B cell (primary cell): ENCODE measurements at regions of chr2 and their contacts with region 1.

Region 1: DNA sequence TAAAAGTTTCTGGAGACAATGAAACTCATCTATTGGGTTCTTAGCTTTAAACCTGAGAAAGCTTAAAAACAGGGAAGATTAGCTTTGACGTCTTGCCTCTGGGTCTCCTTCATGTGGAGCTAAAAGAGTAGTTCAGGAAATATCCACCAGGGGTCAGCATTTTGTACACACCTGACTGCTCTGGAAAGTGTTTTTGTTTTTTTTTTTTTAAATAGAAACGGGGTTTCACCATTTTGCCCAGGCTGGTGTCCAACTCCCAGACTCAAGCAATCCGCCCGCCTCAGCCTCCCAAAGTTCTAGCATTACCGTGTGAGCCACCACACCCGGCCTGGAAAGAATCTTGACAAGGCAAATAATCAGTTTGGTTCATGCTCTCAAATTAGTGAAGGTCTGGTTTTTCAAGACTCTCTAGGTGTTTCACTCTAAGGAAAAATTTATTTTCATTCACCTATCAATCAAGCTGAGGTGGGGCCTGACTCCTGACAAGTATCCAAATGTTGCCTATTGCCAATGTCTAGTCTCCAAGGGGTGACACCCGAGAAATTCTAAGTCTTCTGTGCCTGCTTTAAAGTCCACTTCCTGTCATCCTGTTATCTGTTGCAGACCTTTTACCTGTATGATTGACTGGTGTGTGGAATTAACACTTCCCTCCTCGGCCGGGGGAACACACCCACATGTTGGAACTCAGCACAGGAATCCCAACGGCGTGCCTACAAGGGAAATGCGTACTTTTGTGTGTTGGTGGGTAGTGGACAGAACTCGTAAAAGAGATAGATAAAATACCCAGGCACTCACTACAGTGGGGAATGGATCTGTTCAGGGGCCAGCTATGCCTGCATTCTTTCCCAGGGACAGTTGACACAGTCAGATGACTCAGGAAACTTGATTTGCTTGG is 11.3 kb downstream of the IL1RN start:
- DNase-seq: peak; percentile 88
- ATAC-seq: peak; percentile 82
- H3K4me3 ChIP-seq: peak overlapping the region in 1 of 5 experiments; percentile 19
- H3K4me3 Mint-ChIP-seq: peak overlapping the region; percentile 71
- H3K27ac ChIP-seq: peak overlapping the region in 1 of 2 donors; percentile 24
- H3K27ac Mint-ChIP-seq: peak overlapping the region; percentile 73
- H3K4me1 ChIP-seq: peaks cover 11 to 13% of the 10 kb centered on the region in 2 donors
- H3K4me1 Mint-ChIP-seq: peaks cover 15% of the 10 kb centered on the region
- H3K27me3 ChIP-seq: no peaks in the 10 kb centered on the region
- H3K27me3 Mint-ChIP-seq: no peaks in the 10 kb centered on the region
- CTCF ChIP-seq: peak; percentile 86

Region 2: DNA sequence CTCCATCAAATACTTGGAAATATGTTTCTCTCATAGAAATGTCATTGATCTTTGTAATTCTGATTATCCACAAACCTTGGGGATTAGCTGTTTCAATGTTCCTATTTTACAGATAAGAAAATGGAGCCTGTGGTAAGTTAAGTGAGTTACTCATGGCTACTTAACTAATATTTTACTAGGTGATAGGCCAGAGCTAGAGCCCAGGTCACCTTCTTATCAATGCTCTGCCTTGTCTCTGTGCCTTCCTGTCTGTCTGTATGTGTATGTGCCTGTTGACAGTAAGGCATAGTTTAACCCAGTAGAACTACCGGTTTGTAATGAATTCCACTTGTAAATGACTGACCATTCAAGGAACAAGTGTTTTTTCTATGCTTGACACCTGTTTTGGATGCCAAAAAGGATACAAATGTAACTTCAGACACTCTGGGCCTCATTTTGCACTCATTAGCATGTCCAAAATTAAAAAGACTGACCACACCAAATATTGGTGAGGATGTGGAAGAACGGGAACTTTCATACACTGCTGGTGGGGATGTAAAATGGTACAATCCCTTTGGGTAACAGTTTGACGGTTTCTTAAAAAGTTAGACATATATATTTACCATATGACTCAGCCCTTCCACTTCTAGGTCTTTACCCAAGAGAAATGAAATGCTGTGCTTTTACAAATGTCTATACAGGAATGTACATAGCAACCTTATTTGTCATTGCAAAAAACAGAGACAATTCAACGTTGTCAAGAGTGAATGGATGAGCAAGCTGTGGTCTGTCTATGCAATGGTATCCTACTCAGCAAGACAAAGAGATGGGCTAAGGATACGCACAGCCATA is 334.8 kb before region 1 on chr2:
- CTCF ChIA-PET with region 1: no interaction called
- POLR2A ChIA-PET with region 1: no interaction called
- intact Hi-C with region 1: no loop called
- DNase-seq: no peak
- ATAC-seq: no peak
- H3K4me3 ChIP-seq: no peak overlapping the region
- H3K4me3 Mint-ChIP-seq: no peak overlapping the region
- H3K27ac ChIP-seq: no peak overlapping the region
- H3K27ac Mint-ChIP-seq: no peak overlapping the region
- H3K4me1 ChIP-seq: peaks cover 0 to 4% of the 10 kb centered on the region in 2 donors
- H3K4me1 Mint-ChIP-seq: peaks cover 11% of the 10 kb centered on the region
- H3K27me3 ChIP-seq: no peaks in the 10 kb centered on the region
- H3K27me3 Mint-ChIP-seq: no peaks in the 10 kb centered on the region
- CTCF ChIP-seq: no peak

Region 3: DNA sequence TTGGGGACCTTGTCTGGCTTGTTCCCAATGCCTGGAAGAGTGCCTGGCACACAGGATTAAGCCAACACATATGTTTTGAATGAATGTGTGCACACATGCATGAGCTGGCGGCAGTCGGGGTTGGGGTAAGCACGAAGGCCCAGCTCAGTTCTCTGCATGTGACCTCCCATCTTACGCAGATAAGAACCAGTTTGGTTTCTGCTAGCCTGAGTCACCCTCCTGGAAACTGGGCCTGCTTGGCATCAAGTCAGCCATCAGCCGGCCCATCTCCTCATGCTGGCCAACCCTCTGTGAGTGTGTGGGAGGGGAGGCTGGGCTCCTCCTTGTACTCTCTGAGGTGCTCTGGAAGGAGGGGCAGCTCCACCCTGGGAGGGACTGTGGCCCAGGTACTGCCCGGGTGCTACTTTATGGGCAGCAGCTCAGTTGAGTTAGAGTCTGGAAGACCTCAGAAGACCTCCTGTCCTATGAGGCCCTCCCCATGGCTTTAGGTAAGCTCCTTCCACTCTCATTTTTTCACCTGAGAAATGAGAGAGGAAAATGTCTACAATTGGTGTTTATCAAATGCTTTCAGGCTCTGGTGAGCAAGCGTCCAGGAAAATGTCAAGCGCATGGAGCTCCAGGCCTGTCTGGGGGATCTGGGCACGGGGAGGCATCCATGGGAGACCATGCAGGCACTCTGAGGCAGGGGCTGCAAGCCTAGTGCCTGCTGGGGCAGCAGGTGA is 21.0 kb before region 1 on chr2:
- CTCF ChIA-PET with region 1: interaction called, 16 read pairs
- POLR2A ChIA-PET with region 1: no interaction called
- intact Hi-C with region 1: no loop called
- DNase-seq: no peak
- ATAC-seq: no peak
- H3K4me3 ChIP-seq: no peak overlapping the region
- H3K4me3 Mint-ChIP-seq: no peak overlapping the region
- H3K27ac ChIP-seq: no peak overlapping the region
- H3K27ac Mint-ChIP-seq: no peak overlapping the region
- H3K4me1 ChIP-seq: peaks cover 25 to 27% of the 10 kb centered on the region in 2 donors
- H3K4me1 Mint-ChIP-seq: peaks cover 19% of the 10 kb centered on the region
- H3K27me3 ChIP-seq: peaks cover 0 to 3% (median 0%) of the 10 kb centered on the region in 4 experiments
- H3K27me3 Mint-ChIP-seq: no peaks in the 10 kb centered on the region
- CTCF ChIP-seq: no peak

Region 4: GRCh38 chr2:113157118-113157896 is 18.6 kb after region 1 on chr2:
- CTCF ChIA-PET with region 1: interaction called, 41 read pairs
- POLR2A ChIA-PET with region 1: interaction called, 5 read pairs
- intact Hi-C with region 1: loop called (anchors 2 kb)
- DNase-seq: peak; percentile 49
- ATAC-seq: peak; percentile 88
- H3K4me3 ChIP-seq: peak overlapping the region; percentile 21 to 71 (median 62)
- H3K4me3 Mint-ChIP-seq: peak overlapping the region; percentile 89
- H3K27ac ChIP-seq: peak overlapping the region; percentile 11 to 59
- H3K27ac Mint-ChIP-seq: peak overlapping the region; percentile 56
- H3K4me1 ChIP-seq: peaks cover 17 to 23% of the 10 kb centered on the region in 2 donors
- H3K4me1 Mint-ChIP-seq: peaks cover 16% of the 10 kb centered on the region
- H3K27me3 ChIP-seq: peaks cover 0 to 2% (median 0%) of the 10 kb centered on the region in 4 experiments
- H3K27me3 Mint-ChIP-seq: no peaks in the 10 kb centered on the region
- CTCF ChIP-seq: no peak

Region 5: DNA sequence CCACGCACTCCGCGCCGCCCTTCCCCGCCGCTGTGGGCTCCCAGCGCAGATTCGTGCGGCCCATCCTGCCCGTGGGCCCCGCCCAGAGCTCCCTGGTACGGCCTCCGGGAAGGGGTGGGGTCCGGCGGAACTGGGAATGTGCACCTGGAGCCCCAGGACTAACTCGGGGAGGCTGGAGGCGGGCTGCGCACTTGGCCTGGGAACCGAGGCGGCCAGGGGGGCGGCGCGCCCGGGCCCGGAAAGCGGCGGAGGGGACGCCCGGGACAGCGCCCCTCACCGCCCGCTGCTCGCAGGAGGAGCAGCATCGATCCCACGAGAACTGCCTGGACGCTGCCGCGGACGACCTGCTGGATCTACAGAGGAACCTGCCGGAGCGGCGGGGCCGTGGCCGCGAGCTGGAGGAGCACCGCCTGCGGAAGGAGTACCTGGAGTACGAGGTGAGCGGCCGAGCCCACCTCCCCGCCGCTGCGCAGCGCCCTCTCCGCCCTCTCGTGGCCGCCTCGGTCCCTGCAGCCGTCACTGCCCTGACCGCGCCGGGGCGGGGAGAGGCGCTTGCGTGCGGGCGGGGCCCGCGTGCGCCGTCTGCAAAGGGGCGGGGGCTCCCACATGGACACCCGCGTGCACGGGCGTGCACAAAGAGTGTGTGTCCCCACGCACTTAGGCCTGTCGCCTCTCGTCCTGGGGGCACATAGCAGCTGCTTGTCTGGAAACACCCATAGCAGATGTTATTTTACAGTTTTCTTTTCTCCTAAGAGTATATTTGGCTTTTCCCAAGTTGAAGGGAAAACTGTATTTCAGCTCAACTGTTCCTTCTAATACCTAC is 60.3 kb after region 1 on chr2:
- CTCF ChIA-PET with region 1: interaction called, 590 read pairs
- POLR2A ChIA-PET with region 1: interaction called, 11 read pairs
- intact Hi-C with region 1: loop called (anchors 1 kb)
- DNase-seq: peak; percentile 86
- ATAC-seq: peak; percentile 90
- H3K4me3 ChIP-seq: peak overlapping the region in 4 of 5 experiments; percentile 11 to 47 (median 32)
- H3K4me3 Mint-ChIP-seq: peak overlapping the region; percentile 80
- H3K27ac ChIP-seq: peak overlapping the region in 1 of 2 donors; percentile 54
- H3K27ac Mint-ChIP-seq: peak overlapping the region; percentile 50
- H3K4me1 ChIP-seq: peaks cover 8 to 14% of the 10 kb centered on the region in 2 donors
- H3K4me1 Mint-ChIP-seq: peaks cover 9% of the 10 kb centered on the region
- H3K27me3 ChIP-seq: no peaks in the 10 kb centered on the region
- H3K27me3 Mint-ChIP-seq: no peaks in the 10 kb centered on the region
- CTCF ChIP-seq: peak; percentile 98

Region 6: DNA sequence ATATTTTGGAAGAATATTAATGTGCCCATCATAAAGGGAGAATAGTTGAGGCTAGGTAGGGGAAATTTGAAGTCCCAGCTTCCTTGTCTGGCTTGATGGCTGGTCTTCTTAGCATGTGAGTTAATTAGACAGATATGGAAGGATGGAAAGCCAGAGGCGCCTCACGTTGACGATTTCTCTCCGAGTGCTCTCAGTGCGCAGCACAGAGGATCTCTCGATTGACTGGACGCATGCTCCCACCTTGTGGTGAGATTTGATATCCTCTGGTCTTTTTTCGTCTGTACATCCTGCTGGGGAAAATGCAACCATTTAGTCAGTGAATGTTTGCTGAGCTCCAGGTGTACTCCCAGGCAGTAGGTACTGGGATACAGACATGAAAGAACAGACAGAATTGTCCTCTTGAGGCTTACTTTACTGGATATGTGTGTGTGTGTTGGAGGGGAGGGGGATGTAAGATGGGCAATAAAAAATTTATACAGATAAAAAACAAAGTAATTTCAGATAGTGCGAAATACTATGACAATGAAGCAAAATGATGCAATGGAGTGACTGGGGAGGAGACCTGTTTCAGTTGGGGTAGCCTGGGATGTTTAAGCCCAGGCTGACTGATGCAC is 231.9 kb after region 1 on chr2:
- CTCF ChIA-PET with region 1: interaction called, 16 read pairs
- POLR2A ChIA-PET with region 1: no interaction called
- intact Hi-C with region 1: loop called (anchors 1 kb)
- DNase-seq: peak; percentile 64
- ATAC-seq: peak; percentile 84
- H3K4me3 ChIP-seq: no peak overlapping the region
- H3K4me3 Mint-ChIP-seq: no peak overlapping the region
- H3K27ac ChIP-seq: no peak overlapping the region
- H3K27ac Mint-ChIP-seq: no peak overlapping the region
- H3K4me1 ChIP-seq: no peaks in the 10 kb centered on the region
- H3K4me1 Mint-ChIP-seq: peaks cover 14% of the 10 kb centered on the region
- H3K27me3 ChIP-seq: no peaks in the 10 kb centered on the region
- H3K27me3 Mint-ChIP-seq: no peaks in the 10 kb centered on the region
- CTCF ChIP-seq: peak; percentile 57